Mammary epithelial cell (primary cell): ENCODE measurements at regions of chr19 and their contacts with region 1.

Region 1: GRCh38 chr19:19342756-19343322 is 22.2 kb downstream of the MAU2 start:
- DNase-seq: peak; percentile 53
- H3K4me3 ChIP-seq: no peak overlapping the region
- H3K27ac ChIP-seq: no peak overlapping the region
- H3K4me1 ChIP-seq: peaks cover 11% of the 10 kb centered on the region
- H3K27me3 ChIP-seq: no peaks in the 10 kb centered on the region
- CTCF ChIP-seq: peak; percentile 85 to 96

Region 2: GRCh38 chr19:19040417-19040816 is 302.4 kb before region 1 on chr19:
- CTCF ChIA-PET with region 1: interaction called, 5 read pairs
- dilution Hi-C with region 1: loop called (anchors 5 kb)
- in situ Hi-C with region 1: no loop called
- intact Hi-C with region 1: no loop called
- DNase-seq: no peak
- H3K4me3 ChIP-seq: no peak overlapping the region
- H3K27ac ChIP-seq: no peak overlapping the region
- H3K4me1 ChIP-seq: no peaks in the 10 kb centered on the region
- H3K27me3 ChIP-seq: no peaks in the 10 kb centered on the region
- CTCF ChIP-seq: no peak

Region 3: DNA sequence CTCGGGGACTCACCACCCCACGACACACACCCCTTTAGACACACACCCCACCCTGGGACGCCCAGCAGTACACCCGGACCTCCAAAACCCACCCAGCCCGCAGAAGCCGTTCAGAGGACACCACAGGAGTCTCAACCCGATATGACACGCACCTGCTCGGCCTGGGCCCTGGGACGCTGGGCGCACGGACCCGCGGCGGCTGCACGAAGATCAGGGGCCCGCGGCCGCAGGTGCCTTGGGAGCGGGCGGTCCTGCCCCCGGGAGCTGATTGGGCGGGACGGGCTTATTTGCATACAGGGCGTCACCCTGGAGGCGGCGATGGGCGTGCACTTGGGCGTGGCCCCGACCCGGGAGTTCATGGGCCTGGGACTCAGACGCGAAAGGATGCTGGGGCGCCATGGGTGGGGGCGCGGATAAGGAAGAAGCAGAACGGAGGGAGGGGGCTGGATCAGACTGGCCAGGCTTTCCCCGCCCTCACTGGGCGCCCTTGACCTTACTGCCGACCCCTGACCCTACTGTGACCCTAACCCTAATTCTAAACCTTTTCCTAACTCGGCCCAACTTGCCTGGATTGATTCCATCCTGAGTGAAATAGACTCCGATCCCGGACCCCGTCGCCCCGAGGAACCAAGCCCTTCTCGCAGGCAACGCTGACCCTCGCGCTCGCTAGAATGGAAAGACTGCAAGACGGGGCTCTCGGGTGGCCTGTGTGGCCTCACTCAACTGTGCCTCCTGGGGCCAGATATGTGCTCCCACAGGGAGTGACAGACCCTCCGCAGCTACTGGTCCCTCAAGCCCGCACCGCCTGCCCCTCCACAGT is 172.6 kb before region 1 on chr19 and contains the start of gene MEF2B:
- CTCF ChIA-PET with region 1: no interaction called
- dilution Hi-C with region 1: no loop called
- in situ Hi-C with region 1: loop called in 1 of 2 experiments (anchors 25 kb)
- intact Hi-C with region 1: no loop called
- DNase-seq: peak; percentile 27
- H3K4me3 ChIP-seq: no peak within 1 kb of the TSS
- H3K27ac ChIP-seq: no peak within 1 kb of the TSS
- H3K4me1 ChIP-seq: peaks cover 3% of the 10 kb centered on the region
- H3K27me3 ChIP-seq: no peaks in the 10 kb centered on the region
- CTCF ChIP-seq: no peak
- total RNA-seq, gene MEF2B: 0.68 TPM in 1 of 2 donors, not detected in the other

Region 4: GRCh38 chr19:19203012-19203856 is 139.6 kb before region 1 on chr19 and contains the start of gene NR2C2AP:
- CTCF ChIA-PET with region 1: no interaction called
- dilution Hi-C with region 1: no loop called
- in situ Hi-C with region 1: no loop called
- intact Hi-C with region 1: no loop called
- DNase-seq: peak; percentile 89
- H3K4me3 ChIP-seq: peak within 1 kb of the TSS; percentile 57 to 98 (median 89)
- H3K27ac ChIP-seq: peak within 1 kb of the TSS; percentile 87
- H3K4me1 ChIP-seq: peaks cover 10% of the 10 kb centered on the region
- H3K27me3 ChIP-seq: no peaks in the 10 kb centered on the region
- CTCF ChIP-seq: no peak
- total RNA-seq, gene NR2C2AP: 8.5 to 20.7 TPM

Region 5: DNA sequence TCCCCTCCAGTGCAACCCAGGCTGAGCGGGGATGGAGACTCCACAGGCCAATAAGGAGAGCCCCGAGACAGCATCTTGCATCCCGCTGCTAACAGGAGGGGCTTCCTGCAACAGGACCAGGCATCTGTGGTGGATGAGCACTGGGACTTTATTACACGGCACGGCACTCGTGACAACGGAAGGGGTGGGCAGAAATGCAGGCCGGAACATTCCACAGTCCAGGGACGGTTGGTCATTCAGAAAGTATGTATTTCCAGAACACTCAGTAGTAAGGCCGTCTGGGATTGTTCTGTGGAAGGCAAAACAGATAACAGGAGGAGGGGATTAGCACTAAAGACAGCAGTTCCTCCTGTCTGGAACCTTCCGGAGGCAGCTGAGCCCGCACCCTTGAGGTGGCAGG is 66.5 kb before region 1 on chr19:
- CTCF ChIA-PET with region 1: no interaction called
- dilution Hi-C with region 1: no loop called
- in situ Hi-C with region 1: no loop called
- intact Hi-C with region 1: no loop called
- DNase-seq: no peak
- H3K4me3 ChIP-seq: no peak overlapping the region
- H3K27ac ChIP-seq: no peak overlapping the region
- H3K4me1 ChIP-seq: no peaks in the 10 kb centered on the region
- H3K27me3 ChIP-seq: peaks cover 2% of the 10 kb centered on the region
- CTCF ChIP-seq: no peak

Region 6: DNA sequence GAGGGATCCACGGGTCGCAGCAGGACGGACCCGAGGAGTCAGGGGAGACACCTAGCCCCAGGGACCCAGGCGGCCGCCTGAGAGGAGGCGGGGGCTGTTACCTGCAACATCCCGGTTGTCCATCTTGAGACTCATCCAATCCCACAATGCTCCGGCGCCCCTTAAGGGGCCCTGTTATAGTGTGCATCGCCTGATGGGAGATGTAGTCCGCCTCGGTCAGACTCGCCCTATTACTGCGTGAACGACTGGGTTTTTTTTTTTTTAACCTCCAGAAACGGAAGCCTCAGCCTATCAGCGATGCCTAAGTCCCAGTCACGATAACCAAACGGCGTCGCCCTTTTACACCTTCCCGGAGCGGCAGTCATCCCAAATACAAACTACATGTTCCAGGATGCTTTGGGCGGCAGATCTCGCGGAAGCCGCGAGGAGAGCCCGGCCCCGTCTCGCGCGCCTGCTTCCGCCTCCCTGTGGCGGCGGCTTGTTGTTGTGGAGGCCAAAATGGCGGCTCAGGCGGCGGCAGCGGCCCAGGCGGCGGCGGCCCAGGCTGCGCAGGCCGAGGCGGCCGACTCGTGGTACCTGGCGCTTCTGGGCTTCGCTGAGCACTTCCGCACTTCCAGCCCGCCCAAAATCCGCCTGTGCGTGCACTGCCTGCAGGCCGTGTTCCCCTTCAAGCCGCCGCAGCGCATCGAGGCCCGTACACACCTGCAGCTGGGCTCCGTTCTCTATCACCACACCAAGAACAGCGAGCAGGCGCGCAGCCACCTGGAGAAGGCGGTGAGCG is 22.3 kb before region 1 on chr19 and contains the starts of genes MAU2 and SUGP1:
- CTCF ChIA-PET with region 1: no interaction called
- dilution Hi-C with region 1: no loop called
- in situ Hi-C with region 1: no loop called
- intact Hi-C with region 1: loop called (anchors 2 kb)
- DNase-seq: peak; percentile 90
- H3K4me3 ChIP-seq: peak within 1 kb of the TSS; percentile 98 to 100 (median 99)
- H3K27ac ChIP-seq: peak within 1 kb of the TSS; percentile 91
- H3K4me1 ChIP-seq: peaks cover 8% of the 10 kb centered on the region
- H3K27me3 ChIP-seq: no peaks in the 10 kb centered on the region
- CTCF ChIP-seq: peak; percentile 4 to 45
- total RNA-seq, gene MAU2: 39.7 to 44.5 TPM
- total RNA-seq, gene SUGP1: 23.3 to 48.1 TPM

Region 7: DNA sequence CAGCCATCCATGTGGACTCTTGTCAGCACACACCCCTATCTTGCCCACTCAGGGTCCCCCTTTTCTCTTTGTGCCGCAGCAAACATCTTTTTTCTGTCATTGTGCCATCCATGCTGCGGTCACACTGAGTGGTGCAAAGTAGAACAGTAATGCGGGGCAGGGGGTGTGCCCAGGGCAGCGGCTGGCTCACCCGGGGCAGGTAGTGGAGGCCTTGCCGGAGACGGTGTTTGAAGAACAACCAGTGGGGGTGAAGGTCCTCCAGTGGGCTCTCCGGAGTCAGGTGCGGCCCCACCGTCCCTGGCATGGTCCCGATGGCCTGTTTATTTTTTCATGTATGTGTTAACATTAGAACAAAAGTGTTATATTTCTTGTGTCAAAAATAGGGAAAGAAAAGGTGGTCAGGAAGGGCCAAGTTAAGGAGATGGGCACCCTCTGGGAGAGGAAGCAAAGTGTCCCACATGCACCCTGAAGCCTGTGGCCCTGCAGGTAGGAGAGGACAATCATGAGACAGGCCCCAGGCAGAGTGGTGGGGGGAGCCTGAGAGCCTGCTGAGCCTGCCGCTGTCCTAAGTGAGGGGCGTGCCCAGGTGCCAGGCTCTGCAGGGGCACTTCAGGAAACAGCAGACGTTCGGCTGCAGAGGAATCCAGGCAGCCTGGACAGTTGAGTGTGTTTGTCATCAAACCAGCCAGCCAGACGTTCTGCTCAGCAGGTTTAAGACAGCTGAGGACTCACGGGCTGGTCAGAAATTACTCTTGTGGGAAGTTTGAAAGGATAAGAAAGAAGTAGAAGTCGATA is 160.2 kb after region 1 on chr19:
- CTCF ChIA-PET with region 1: no interaction called
- dilution Hi-C with region 1: loop called (anchors 10 kb)
- in situ Hi-C with region 1: no loop called
- intact Hi-C with region 1: no loop called
- DNase-seq: no peak
- H3K4me3 ChIP-seq: no peak overlapping the region
- H3K27ac ChIP-seq: no peak overlapping the region
- H3K4me1 ChIP-seq: no peaks in the 10 kb centered on the region
- H3K27me3 ChIP-seq: no peaks in the 10 kb centered on the region
- CTCF ChIP-seq: no peak